PC-9 (cell line): ENCODE measurements at regions of chr1 and their contacts with region 1.

Region 1: DNA sequence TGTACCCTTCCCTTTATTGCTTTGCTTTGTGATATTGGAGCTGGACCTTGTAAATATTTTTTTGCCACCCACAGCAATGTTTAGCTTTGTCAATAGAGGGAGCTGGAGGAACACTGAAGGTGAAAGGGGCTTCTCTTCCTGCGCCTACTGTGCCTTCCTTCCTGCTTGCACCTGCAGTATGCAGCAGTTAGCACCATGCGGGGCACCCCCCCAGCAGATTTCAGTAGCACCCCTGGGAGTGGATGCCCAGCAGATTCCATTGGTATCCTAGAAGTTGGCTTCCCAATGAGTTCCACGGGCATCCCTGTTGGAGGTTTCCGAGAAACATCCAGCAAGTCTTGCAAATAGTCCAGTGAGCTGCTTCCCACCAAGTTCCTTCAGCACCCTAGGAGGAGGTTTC is 25.6 kb downstream of the S100A10 start:
- DNase-seq: peak in 1 of 2 experiments; percentile 51
- H3K4me3 ChIP-seq: no peak overlapping the region
- H3K27ac ChIP-seq: no peak overlapping the region
- H3K4me1 ChIP-seq: peaks cover 60% of the 10 kb centered on the region
- H3K27me3 ChIP-seq: no peaks in the 10 kb centered on the region
- CTCF ChIP-seq: peak; percentile 70

Region 2: GRCh38 chr1:151693076-151693651 is 274.9 kb before region 1 on chr1:
- CTCF ChIA-PET with region 1: interaction called, 12 read pairs
- POLR2A ChIA-PET with region 1: no interaction called
- intact Hi-C with region 1: no loop called
- DNase-seq: no peak
- H3K4me3 ChIP-seq: no peak overlapping the region
- H3K27ac ChIP-seq: no peak overlapping the region
- H3K4me1 ChIP-seq: no peaks in the 10 kb centered on the region
- H3K27me3 ChIP-seq: no peaks in the 10 kb centered on the region
- CTCF ChIP-seq: peak; percentile 72

Region 3: DNA sequence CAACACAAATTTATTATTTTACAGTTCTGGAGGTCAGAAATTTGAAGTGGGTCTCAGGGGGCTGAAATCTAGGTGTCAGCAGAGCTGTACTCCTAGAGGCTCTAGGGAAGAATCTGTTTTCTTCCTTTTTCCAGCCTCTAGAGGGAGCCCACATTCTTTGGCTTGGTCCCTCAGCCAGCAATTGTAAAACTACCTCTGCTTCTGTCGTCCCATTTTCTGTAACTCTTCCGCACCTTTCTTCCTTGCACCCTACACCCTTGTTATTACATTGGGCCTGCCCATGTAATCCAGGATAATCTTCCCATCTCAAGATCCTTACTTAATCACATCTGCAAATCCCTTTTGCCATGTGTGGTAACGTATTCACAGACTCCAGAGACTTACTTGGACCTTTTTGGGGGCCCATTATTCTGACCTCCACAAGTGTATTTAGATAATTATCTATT is 34.0 kb before region 1 on chr1:
- CTCF ChIA-PET with region 1: interaction called, 3 read pairs
- POLR2A ChIA-PET with region 1: no interaction called
- intact Hi-C with region 1: loop called (anchors 1 kb)
- DNase-seq: peak; percentile 54 to 58
- H3K4me3 ChIP-seq: no peak overlapping the region
- H3K27ac ChIP-seq: no peak overlapping the region
- H3K4me1 ChIP-seq: peaks cover 12% of the 10 kb centered on the region; the same call in 1 of the 2 replicates
- H3K27me3 ChIP-seq: no peaks in the 10 kb centered on the region
- CTCF ChIP-seq: peak; percentile 89

Region 4: GRCh38 chr1:151984313-151984956 is 16.4 kb after region 1 on chr1:
- CTCF ChIA-PET with region 1: interaction called, 10 read pairs
- POLR2A ChIA-PET with region 1: interaction called, 16 read pairs
- intact Hi-C with region 1: loop called (anchors 1 kb)
- DNase-seq: no peak
- H3K4me3 ChIP-seq: no peak overlapping the region
- H3K27ac ChIP-seq: peak overlapping the region; percentile 9; the same call in 1 of the 2 replicates
- H3K4me1 ChIP-seq: peaks cover 93% of the 10 kb centered on the region
- H3K27me3 ChIP-seq: no peaks in the 10 kb centered on the region
- CTCF ChIP-seq: no peak

Region 5: GRCh38 chr1:152034646-152035405 is 66.8 kb after region 1 on chr1:
- CTCF ChIA-PET with region 1: interaction called, 5 read pairs
- POLR2A ChIA-PET with region 1: interaction called, 12 read pairs
- intact Hi-C with region 1: loop called (anchors 1 kb)
- DNase-seq: peak; percentile 78 to 90
- H3K4me3 ChIP-seq: peak overlapping the region; percentile 89
- H3K27ac ChIP-seq: peak overlapping the region; percentile 97
- H3K4me1 ChIP-seq: peaks cover 66% of the 10 kb centered on the region
- H3K27me3 ChIP-seq: no peaks in the 10 kb centered on the region
- CTCF ChIP-seq: peak; percentile 94